ENCODE measurements at regions of chr11 and their contacts with region 1.

Region 1: GRCh38 chr11:1882519-1883238 is 9.0 kb downstream of the PRR33 start:
- DNase-seq: peak; percentile 80
- H3K4me3 ChIP-seq: no peak overlapping the region
- H3K27ac ChIP-seq: peak overlapping the region; percentile 48
- H3K4me1 ChIP-seq: peaks cover 21% of the 10 kb centered on the region
- CTCF ChIP-seq: peak; percentile 91

Region 2: GRCh38 chr11:1628506-1629325 is 254.0 kb before region 1 on chr11:
- CTCF ChIA-PET with region 1: no interaction called
- POLR2A ChIA-PET with region 1: no interaction called
- intact Hi-C with region 1: no loop called
- DNase-seq: peak; percentile 43
- H3K4me3 ChIP-seq: no peak overlapping the region
- H3K27ac ChIP-seq: no peak overlapping the region
- H3K4me1 ChIP-seq: no peaks in the 10 kb centered on the region
- CTCF ChIP-seq: peak; percentile 87

Region 3: DNA sequence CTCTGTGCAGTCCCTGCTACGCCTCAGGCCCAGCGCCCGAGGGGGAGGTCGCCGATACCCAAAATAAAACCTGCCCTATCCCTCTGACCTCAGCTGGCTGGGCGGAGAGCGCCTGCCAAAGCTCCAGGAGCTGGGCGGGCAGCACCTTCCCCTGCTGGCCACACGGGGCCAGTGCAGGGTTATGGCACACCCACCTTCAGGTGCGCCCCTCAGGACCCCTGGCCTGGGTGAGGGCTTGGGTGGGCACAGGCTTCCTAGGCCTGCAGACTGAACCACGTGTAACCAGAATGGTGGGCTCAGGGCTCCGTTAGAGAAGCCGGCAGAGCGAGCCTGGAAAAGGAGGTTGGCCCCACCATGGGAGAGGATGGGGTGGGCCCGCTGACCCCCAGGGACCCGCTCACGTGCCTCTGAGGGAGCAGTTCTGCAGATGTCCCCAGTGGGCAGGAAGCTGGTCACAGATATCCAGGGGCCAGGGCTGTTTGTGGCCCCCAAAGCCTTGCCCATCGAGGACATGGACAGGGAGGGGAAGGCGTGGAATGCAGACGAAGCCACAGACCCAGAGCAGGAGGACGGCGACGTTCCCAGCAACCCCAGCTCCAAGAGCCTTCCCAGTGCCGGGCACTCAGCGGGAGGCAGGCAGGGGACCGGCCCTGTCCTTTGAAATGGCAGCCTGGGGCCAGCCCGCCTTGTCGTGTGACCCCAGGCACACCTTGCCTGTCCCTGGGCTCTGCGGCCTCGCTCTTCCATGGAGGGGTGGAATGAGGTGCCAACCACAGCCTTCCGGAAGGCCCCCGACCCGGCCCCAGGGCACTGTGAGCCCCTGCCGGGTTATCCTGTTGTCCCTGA is 35.2 kb after region 1 on chr11:
- CTCF ChIA-PET with region 1: no interaction called
- POLR2A ChIA-PET with region 1: no interaction called
- intact Hi-C with region 1: loop called (anchors 5 kb)
- DNase-seq: no peak
- H3K4me3 ChIP-seq: no peak overlapping the region
- H3K27ac ChIP-seq: no peak overlapping the region
- H3K4me1 ChIP-seq: no peaks in the 10 kb centered on the region
- CTCF ChIP-seq: no peak; the same call in 1 of the 2 replicates